RWPE1 (cell line): ENCODE measurements at regions of chr4 and their contacts with region 1.

Region 1: DNA sequence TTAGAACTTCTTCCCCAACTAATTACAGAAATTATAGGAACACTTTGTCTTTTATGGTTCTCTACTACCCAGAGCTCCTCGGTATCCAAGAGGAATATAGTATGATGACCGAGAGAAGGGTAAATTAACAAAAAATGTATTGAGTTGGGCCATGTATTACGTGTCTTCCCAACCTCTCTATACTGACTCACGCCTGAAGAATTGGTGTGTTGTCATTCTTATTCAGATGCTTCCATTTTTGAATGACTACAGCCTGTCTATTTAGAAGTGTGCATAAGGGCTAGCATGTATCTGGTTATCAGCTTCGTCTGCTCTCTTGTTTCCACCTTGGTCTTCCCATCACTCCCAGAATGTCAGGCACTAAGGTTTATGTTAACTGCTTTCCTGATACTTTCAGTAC is 24.5 kb upstream of the SCD5 start:
- DNase-seq: no peak
- H3K27ac ChIP-seq: no peak overlapping the region
- CTCF ChIP-seq: no peak

Region 2: GRCh38 chr4:82643994-82644733 is 178.9 kb before region 1 on chr4:
- CTCF ChIA-PET with region 1: no interaction called
- POLR2A ChIA-PET with region 1: no interaction called
- DNase-seq: peak; percentile 1
- H3K27ac ChIP-seq: no peak overlapping the region
- CTCF ChIP-seq: no peak

Region 3: GRCh38 chr4:82661181-82661992 is 161.7 kb before region 1 on chr4:
- CTCF ChIA-PET with region 1: no interaction called
- POLR2A ChIA-PET with region 1: interaction called, 13 read pairs
- DNase-seq: no peak
- H3K27ac ChIP-seq: no peak overlapping the region
- CTCF ChIP-seq: no peak

Region 4: DNA sequence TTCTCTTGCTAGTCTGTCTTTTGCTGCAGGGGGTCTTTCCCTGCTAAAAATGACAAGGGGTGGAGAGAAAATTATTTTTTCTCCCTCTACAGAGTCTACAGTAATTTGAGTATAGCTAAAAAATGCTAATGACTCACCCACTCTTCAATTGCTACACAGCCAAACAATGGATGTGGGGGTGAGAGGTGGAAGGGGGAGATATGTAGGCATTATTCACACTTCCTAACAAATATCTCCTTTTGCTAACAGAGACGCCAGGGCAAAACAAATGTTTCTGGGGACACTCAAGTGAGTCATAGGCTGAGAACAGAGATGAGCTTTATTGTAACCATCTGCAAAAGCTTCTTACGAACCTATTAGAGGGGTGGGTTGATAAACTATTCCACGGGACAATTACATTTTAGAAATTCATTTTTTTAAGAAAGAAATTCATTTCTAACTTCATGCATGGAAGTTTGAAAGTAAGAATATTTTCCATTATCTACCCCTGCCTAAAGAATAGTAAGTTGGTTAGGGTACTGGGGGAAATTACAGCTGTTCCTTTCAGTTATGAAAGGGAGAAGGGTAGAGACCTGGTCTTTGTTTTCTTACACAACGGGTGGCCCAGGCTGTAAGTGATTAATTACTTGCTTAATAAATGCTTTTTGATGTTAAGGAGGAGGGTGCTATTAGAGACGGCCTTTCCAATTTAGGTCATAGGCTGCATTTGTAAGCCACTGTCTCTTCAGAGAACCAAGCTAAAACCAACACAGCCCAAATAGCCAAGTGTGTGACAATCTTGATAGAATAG is 37.3 kb before region 1 on chr4:
- CTCF ChIA-PET with region 1: no interaction called
- POLR2A ChIA-PET with region 1: no interaction called
- DNase-seq: peak; percentile 87
- H3K27ac ChIP-seq: no peak overlapping the region
- CTCF ChIP-seq: no peak

Region 5: DNA sequence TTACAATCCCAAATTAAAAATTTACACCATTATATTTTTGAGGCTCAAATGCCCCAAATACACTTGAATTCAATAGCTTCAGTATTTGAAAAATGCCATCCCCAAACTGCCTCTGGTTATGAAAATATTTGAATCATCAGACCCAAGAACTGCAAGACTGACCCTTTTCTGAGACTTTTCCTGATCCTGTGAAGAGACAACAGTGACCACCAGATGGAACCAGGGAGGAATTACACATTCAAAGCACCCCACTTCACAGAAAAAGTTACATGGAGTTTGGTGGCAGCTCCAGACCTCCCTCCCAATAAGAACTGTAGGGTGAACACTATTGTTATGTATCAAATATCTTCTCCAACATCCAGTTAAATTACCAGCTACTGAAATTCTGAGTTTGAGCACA is 19.5 kb after region 1 on chr4:
- CTCF ChIA-PET with region 1: no interaction called
- POLR2A ChIA-PET with region 1: no interaction called
- DNase-seq: peak; percentile 5
- H3K27ac ChIP-seq: no peak overlapping the region
- CTCF ChIP-seq: peak; percentile 25

Region 6: GRCh38 chr4:82930848-82931755 is 108.0 kb after region 1 on chr4:
- CTCF ChIA-PET with region 1: no interaction called
- POLR2A ChIA-PET with region 1: no interaction called
- DNase-seq: no peak
- H3K27ac ChIP-seq: no peak overlapping the region
- CTCF ChIP-seq: no peak